ENCODE measurements at regions of chr16 and their contacts with region 1.

Region 1: GRCh38 chr16:86252596-86252995 is 257.7 kb upstream of the FOXF1 start:
- DNase-seq: no peak
- H3K4me3 ChIP-seq: no peak overlapping the region
- H3K27ac ChIP-seq: peak overlapping the region; percentile 70
- H3K27me3 ChIP-seq: no peaks in the 10 kb centered on the region
- CTCF ChIP-seq: peak; percentile 35

Region 2: DNA sequence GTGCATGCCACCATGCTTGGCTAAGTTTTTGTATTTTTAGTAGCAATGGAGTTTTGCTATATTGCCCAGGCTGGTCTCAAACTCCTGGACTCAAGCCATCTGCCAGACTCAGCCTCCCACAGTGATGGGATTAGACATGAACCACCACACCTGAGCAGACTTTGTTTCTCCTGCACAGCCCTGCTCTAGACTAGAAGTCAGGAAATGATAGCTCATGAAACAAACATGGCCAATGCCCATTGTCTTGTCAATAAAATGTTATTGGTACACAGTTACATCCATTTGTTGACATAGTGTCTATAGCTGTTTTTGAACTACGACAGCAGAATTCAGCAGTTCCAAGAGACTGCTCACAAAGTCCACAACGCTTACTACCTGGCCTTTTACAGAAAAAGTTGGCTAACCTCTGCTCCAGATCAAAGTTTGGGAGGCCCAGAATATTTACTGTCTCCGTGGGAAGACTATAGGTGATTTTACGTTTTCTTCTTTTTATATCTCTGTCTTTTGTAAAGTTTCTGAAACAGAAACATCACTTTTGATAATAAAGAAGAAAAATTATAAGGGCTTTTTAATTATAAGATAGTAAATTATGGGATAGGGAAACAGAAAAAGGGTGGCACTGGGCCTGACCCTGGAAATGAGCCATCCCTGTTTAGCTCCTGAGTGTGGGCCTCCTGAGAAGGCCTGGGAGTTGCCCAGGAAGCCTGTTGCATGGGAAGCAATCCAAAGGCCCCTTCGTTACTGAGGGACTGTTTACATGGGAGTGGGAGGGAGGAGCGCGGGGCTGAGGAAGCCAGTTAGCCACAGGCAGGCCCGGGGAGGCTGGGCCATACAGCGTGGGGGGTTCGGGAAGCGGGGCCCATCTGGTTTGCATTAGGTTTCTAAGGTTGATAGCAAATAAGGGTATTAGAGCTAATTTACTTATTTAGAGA is 152.1 kb before region 1 on chr16:
- CTCF ChIA-PET with region 1: no interaction called
- POLR2A ChIA-PET with region 1: no interaction called
- DNase-seq: peak; percentile 71
- H3K4me3 ChIP-seq: no peak overlapping the region
- H3K27ac ChIP-seq: peak overlapping the region; percentile 61
- H3K27me3 ChIP-seq: peaks cover 3% of the 10 kb centered on the region
- CTCF ChIP-seq: no peak

Region 3: GRCh38 chr16:86222965-86223551 is 29.5 kb before region 1 on chr16:
- CTCF ChIA-PET with region 1: interaction called, 10 read pairs
- POLR2A ChIA-PET with region 1: interaction called, 24 read pairs
- DNase-seq: peak; percentile 94
- H3K4me3 ChIP-seq: peak overlapping the region; percentile 80
- H3K27ac ChIP-seq: peak overlapping the region; percentile 99
- H3K27me3 ChIP-seq: no peaks in the 10 kb centered on the region
- CTCF ChIP-seq: peak; percentile 24; the same call in 1 of the 2 replicates

Region 4: GRCh38 chr16:86240716-86241363 is 11.8 kb before region 1 on chr16:
- CTCF ChIA-PET with region 1: interaction called, 15 read pairs
- POLR2A ChIA-PET with region 1: interaction called, 4 read pairs
- DNase-seq: no peak
- H3K4me3 ChIP-seq: no peak overlapping the region
- H3K27ac ChIP-seq: peak overlapping the region; percentile 23
- H3K27me3 ChIP-seq: no peaks in the 10 kb centered on the region
- CTCF ChIP-seq: no peak